Ascending aorta (tissue), 2 donors: ENCODE measurements at regions of chr3 and their contacts with region 1.

Region 1: DNA sequence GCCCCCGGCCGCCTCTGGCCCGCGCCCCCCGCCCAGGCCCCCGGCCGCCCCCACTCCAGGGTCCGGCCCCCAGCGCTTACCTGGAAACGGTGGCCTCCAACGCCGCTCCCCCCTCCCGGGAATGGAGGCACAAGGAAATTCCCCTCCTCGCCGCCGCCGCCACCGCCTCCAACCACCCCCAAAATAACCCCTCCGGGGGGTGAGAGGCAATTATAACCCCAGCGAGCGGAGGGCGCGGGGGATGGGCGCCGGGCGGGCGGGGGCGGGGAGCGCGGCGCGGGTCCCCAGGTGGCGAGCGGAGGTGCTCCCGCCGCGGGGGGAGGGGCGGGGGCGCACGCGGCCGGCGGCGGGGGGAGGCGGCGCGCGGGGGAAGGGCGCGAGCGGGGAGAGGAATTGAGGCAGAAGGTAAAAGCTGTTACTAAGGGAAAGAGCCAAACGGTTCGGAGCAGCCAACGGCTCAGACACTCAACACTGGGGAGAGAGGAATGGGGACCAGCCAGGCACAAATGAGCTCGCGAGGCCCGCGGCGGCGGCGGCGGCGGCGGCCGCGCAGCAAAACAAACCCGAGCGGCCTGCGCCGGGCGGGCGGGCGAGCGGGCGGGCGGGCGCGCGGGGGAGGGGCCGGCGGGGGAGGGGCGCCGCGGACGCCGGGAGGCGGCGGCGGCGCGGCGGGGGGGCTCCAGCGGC is at the start of gene TBL1XR1:
- DNase-seq: peak; percentile 73 to 96
- H3K4me3 ChIP-seq: peak within 1 kb of the TSS; percentile 97
- H3K27ac ChIP-seq: peak within 1 kb of the TSS; percentile 96 to 98
- H3K4me1 ChIP-seq: peaks cover 0 to 12% of the 10 kb centered on the region in 2 donors
- H3K27me3 ChIP-seq: no peaks in the 10 kb centered on the region
- CTCF ChIP-seq: no peak
- total RNA-seq, gene TBL1XR1: 52.0 TPM

Region 2: GRCh38 chr3:177050501-177051237 is 146.5 kb before region 1 on chr3:
- intact Hi-C with region 1: loop called (anchors 2 kb)
- DNase-seq: no peak
- H3K4me3 ChIP-seq: no peak overlapping the region
- H3K27ac ChIP-seq: no peak overlapping the region
- H3K4me1 ChIP-seq: peaks cover 0 to 8% of the 10 kb centered on the region in 2 donors
- H3K27me3 ChIP-seq: no peaks in the 10 kb centered on the region
- CTCF ChIP-seq: peak; percentile 56 to 60 (median 59)

Region 3: GRCh38 chr3:177294221-177294620 is 97.0 kb after region 1 on chr3:
- intact Hi-C with region 1: loop called (anchors 2 kb)
- DNase-seq: peak; percentile 29 to 89
- H3K4me3 ChIP-seq: no peak overlapping the region
- H3K27ac ChIP-seq: peak overlapping the region; percentile 80 to 84
- H3K4me1 ChIP-seq: peaks cover 3 to 11% of the 10 kb centered on the region in 2 donors
- H3K27me3 ChIP-seq: no peaks in the 10 kb centered on the region
- CTCF ChIP-seq: no peak

Region 4: GRCh38 chr3:177816667-177817208 is 619.6 kb after region 1 on chr3:
- intact Hi-C with region 1: loop called (anchors 5 kb)
- DNase-seq: peak in 1 of 2 donors; percentile 73
- H3K4me3 ChIP-seq: no peak overlapping the region
- H3K27ac ChIP-seq: peak overlapping the region; percentile 82 to 84
- H3K4me1 ChIP-seq: peaks cover 0 to 29% of the 10 kb centered on the region in 2 donors
- H3K27me3 ChIP-seq: no peaks in the 10 kb centered on the region
- CTCF ChIP-seq: peak in 2 of 3 experiments; percentile 17 to 35

Region 5: DNA sequence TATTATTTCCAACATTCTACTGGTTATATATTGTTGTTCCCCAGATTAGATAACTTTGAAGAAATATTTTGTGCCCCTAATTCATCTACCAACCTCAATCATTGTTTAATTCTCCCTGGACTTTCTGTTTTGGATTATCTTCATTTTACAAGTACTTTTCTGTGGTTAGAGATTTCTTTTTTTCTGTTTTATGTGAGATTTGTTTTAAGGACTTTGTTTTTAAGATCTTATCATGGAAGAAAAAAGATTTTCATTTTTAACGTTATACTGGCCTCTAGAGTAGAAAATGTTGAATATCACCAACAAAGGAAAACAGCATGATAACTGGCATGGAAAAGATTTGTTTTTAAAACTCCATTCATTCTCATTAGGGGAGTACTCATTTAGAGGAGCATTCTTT is 1128.1 kb after region 1 on chr3:
- intact Hi-C with region 1: loop called (anchors 2 kb)
- DNase-seq: no peak
- H3K4me3 ChIP-seq: no peak overlapping the region
- H3K27ac ChIP-seq: no peak overlapping the region
- H3K4me1 ChIP-seq: peaks cover 0 to 15% of the 10 kb centered on the region in 2 donors
- H3K27me3 ChIP-seq: no peaks in the 10 kb centered on the region
- CTCF ChIP-seq: peak in 2 of 3 experiments; percentile 47 to 54

Region 6: GRCh38 chr3:178385280-178385952 is 1188.2 kb after region 1 on chr3:
- intact Hi-C with region 1: loop called (anchors 5 kb)
- DNase-seq: no peak
- H3K4me3 ChIP-seq: no peak overlapping the region
- H3K27ac ChIP-seq: peak overlapping the region in 1 of 2 donors; percentile 43
- H3K4me1 ChIP-seq: peaks cover 3 to 17% of the 10 kb centered on the region in 2 donors
- H3K27me3 ChIP-seq: no peaks in the 10 kb centered on the region
- CTCF ChIP-seq: peak; percentile 75 to 87 (median 82)